PC-9 (cell line): ENCODE measurements at regions of chr7 and their contacts with region 1.

Region 1: DNA sequence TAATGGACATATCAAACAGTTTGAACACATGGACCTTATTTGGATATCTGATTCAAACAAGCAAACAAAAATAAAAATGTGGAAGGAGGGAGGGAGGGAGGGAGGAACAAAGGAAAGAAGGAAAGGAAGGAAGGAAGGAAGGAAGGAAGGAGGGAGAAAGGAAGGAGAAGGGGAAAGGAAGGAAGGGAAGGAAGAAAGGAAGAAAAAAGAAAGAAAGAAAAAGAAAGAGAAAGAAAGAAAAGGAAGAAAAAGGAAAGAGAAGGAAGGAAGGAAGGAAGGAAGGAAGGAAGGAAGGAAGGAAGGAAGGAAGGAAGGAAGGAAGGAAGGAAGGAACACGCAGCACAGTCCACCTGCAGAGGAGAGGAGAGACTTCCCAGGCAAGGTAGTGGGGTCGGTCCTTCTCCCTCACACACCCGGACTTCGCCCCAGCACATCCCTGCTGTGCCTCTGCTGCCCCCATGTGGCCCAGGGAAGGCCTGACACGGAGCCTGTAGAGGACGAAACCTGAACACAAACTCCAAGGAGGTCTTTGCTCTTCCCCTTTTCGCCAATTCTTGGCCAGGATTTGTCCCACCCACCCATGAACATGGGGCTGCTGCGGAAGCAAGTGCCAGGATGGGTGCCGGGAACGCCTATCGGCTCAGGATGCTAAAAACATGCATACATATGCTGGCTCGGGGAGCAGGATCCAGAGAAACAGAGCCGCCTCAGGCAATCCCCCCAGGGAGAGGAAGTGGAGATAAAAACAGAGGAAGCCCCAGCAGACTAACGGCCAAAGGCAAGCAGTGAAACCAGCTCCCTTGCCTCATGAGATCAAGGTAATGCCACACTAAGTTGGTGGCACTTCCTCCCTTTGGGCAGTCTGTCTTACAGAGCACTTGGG is 52.3 kb upstream of the DGKI start:
- DNase-seq: peak; percentile 54 to 78
- H3K4me3 ChIP-seq: no peak overlapping the region
- H3K27ac ChIP-seq: no peak overlapping the region
- H3K4me1 ChIP-seq: no peaks in the 10 kb centered on the region
- H3K27me3 ChIP-seq: no peaks in the 10 kb centered on the region
- CTCF ChIP-seq: peak; percentile 95

Region 2: GRCh38 chr7:137606061-137606674 is 292.9 kb before region 1 on chr7:
- CTCF ChIA-PET with region 1: no interaction called
- POLR2A ChIA-PET with region 1: no interaction called
- intact Hi-C with region 1: loop called (anchors 1 kb)
- DNase-seq: peak in 1 of 2 experiments; percentile 59
- H3K4me3 ChIP-seq: no peak overlapping the region
- H3K27ac ChIP-seq: no peak overlapping the region
- H3K4me1 ChIP-seq: no peaks in the 10 kb centered on the region
- H3K27me3 ChIP-seq: peaks cover 33% of the 10 kb centered on the region
- CTCF ChIP-seq: peak; percentile 83

Region 3: DNA sequence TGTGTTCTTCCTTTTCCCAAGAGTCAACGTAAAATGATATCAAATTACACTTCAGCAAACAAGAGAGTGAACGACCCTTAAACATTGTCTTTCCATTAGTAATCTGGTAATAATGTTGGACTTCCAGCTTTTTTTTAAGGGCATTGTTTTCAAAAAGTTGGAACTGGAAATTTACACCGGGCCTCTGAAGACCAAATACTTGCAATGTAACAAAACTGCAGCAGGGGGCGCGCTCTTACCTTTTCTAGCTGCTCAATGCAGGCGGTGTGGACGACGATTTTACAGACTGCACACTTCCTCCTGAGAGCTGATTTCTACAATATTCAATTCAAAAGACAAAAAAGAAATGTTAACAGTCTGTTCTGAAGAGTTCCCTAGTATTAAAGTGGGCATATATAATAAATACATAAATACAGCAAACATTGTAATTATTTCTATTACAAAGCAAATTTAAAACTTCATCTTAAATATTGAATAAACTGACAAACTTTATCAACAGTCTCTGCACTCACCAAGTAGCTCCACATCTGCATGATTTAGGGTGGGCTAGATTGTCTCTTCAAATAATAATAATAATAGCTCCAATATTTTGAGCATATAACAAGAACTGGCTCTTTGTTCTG is 242.7 kb before region 1 on chr7:
- CTCF ChIA-PET with region 1: no interaction called
- POLR2A ChIA-PET with region 1: no interaction called
- intact Hi-C with region 1: loop called (anchors 1 kb)
- DNase-seq: peak in 1 of 2 experiments; percentile 75
- H3K4me3 ChIP-seq: no peak overlapping the region
- H3K27ac ChIP-seq: no peak overlapping the region
- H3K4me1 ChIP-seq: no peaks in the 10 kb centered on the region
- H3K27me3 ChIP-seq: peaks cover 57% of the 10 kb centered on the region
- CTCF ChIP-seq: peak; percentile 95

Region 4: GRCh38 chr7:137943147-137943551 is 44.1 kb after region 1 on chr7:
- CTCF ChIA-PET with region 1: no interaction called
- POLR2A ChIA-PET with region 1: no interaction called
- intact Hi-C with region 1: no loop called
- DNase-seq: no peak
- H3K4me3 ChIP-seq: no peak overlapping the region
- H3K27ac ChIP-seq: no peak overlapping the region
- H3K4me1 ChIP-seq: no peaks in the 10 kb centered on the region
- H3K27me3 ChIP-seq: no peaks in the 10 kb centered on the region
- CTCF ChIP-seq: no peak

Region 5: DNA sequence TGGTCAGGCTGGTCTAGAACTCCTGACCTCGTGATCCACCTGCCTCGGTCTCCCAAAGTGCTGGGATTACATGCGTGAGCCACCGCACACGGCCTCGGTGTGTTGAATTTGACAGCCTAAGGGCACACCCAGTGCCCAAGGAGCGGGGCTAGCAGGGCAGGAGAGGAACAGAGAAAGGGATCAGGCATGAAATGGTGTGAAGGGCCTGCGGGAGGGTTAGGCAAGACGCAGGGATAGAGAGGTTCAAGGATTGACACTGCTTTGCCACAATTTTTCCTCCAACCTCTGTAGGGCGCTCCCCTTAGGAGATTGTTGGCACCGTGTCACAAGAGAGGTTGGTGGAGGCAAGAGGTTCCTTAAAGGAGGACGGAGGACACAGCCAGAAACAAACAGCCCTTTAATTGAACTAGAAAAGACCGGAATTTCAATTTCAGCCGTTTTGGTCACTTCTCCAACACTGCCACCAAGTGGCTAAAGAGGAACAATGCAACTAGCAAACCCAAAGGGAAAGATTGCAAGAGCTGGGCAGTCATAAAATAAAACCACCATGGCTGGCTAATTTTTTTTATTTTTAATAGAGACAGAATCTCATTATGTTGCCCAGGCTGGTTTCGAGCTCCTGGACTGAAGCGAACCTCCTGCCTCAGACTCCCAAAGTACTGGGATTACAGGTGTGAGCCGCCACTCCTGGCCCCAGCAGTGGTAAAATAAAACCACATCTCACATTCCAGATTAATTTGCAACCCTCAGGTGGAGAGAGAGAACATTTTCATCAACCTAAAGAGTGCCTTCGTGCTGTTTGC is 109.7 kb after region 1 on chr7:
- CTCF ChIA-PET with region 1: interaction called, 5 read pairs
- POLR2A ChIA-PET with region 1: no interaction called
- intact Hi-C with region 1: loop called (anchors 1 kb)
- DNase-seq: peak; percentile 26 to 61
- H3K4me3 ChIP-seq: no peak overlapping the region
- H3K27ac ChIP-seq: no peak overlapping the region
- H3K4me1 ChIP-seq: no peaks in the 10 kb centered on the region
- H3K27me3 ChIP-seq: no peaks in the 10 kb centered on the region
- CTCF ChIP-seq: peak; percentile 96

Region 6: GRCh38 chr7:138077809-138078208 is 178.7 kb after region 1 on chr7:
- CTCF ChIA-PET with region 1: no interaction called
- POLR2A ChIA-PET with region 1: no interaction called
- intact Hi-C with region 1: loop called (anchors 10 kb)
- DNase-seq: peak in 1 of 2 experiments; percentile 47
- H3K4me3 ChIP-seq: no peak overlapping the region
- H3K27ac ChIP-seq: peak overlapping the region; percentile 67
- H3K4me1 ChIP-seq: peaks cover 53% of the 10 kb centered on the region
- H3K27me3 ChIP-seq: no peaks in the 10 kb centered on the region
- CTCF ChIP-seq: no peak

Region 7: GRCh38 chr7:138097064-138097741 is 198.1 kb after region 1 on chr7:
- CTCF ChIA-PET with region 1: no interaction called
- POLR2A ChIA-PET with region 1: no interaction called
- intact Hi-C with region 1: loop called (anchors 5 kb)
- DNase-seq: peak; percentile 13 to 39
- H3K4me3 ChIP-seq: no peak overlapping the region
- H3K27ac ChIP-seq: no peak overlapping the region
- H3K4me1 ChIP-seq: peaks cover 12% of the 10 kb centered on the region
- H3K27me3 ChIP-seq: no peaks in the 10 kb centered on the region
- CTCF ChIP-seq: peak; percentile 60

Region 8: DNA sequence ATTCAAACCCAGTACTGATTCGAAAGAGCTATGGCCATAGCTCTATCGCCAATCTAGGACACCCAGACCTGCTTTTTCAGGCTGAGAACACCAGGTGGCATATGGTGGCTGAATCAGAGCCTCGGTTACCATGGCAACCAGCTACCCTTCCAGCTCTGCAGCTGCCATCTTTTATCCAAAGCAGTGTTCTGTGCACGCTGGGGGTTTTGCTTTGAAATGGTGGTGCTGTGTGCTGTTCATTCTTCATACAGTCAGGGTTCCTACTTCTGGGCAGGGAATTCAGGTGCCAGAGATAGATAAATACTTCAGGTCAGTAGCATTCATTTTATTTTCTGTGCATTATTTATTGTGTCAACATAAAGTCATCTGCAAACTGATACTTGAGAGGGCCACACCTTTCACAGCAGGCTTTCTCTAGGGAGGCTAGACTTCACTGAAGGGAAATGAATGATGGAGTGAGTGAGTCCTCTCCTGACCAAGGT is 262.6 kb after region 1 on chr7:
- CTCF ChIA-PET with region 1: no interaction called
- POLR2A ChIA-PET with region 1: no interaction called
- intact Hi-C with region 1: loop called (anchors 10 kb)
- DNase-seq: peak; percentile 78 to 81
- H3K4me3 ChIP-seq: no peak overlapping the region
- H3K27ac ChIP-seq: no peak overlapping the region
- H3K4me1 ChIP-seq: 0 out of 2 replicates have a peak, but pooled peaks cover 9% of the 10 kb centered on the region
- H3K27me3 ChIP-seq: no peaks in the 10 kb centered on the region
- CTCF ChIP-seq: peak; percentile 89